Breast epithelium (tissue), 4 donors: ENCODE measurements at regions of chr1 and their contacts with region 1.

Region 1: DNA sequence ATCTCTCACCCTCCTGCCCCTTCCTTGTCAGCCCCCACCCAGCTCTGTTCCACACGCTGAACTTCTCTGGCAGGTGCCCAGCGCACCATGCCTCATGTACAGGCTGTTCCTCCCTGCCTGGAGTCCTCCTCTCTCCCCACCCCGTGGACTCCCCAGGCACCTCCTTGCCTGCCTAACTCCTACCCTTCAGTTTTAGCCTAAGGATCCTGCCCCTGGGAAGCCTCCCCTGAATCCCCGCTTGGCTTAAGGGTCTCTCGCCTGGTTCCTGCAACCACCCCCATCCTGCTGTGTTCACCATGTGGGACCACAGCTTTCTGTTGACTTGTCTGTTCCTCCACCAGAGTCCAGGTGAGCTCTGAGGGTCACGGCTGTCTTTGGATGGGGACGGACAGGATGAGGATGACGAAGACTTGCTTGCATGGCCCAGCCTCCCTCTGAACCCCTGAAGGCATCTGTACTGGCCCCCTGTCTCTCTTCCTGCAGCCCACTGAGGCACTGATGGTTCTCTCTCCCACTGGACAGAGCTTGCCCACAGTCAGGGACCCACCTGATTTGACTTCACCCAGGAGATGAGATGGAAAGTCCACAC is 153.2 kb upstream of the C1orf174 start:
- DNase-seq: no peak
- H3K4me3 ChIP-seq: no peak overlapping the region
- H3K27ac ChIP-seq: no peak overlapping the region
- H3K4me1 ChIP-seq: no peaks in the 10 kb centered on the region
- H3K27me3 ChIP-seq: peaks cover 0 to 21% of the 10 kb centered on the region in 2 donors
- CTCF ChIP-seq: no peak
- POLR2A ChIP-seq: no peak

Region 2: DNA sequence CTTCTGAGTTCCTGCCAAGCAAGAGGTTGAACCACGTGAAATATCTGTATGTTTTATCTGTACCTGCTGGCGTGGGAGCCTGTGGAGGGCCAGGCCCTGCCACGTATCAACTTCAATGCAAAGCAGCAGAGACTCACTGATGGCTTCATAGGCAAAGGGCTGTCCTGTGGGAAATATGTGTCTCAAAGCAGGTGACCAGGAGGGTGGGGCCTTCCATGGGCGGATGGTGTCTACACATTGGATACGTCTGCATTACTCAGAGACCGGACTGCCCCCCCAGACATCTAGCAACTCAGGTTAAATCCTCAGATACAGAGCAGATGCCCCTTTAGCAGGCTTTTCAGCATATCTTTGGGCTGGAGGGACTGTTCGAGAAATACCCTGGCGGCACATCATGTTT is 57.6 kb after region 1 on chr1:
- intact Hi-C with region 1: loop called (anchors 5 kb)
- DNase-seq: no peak
- H3K4me3 ChIP-seq: no peak overlapping the region
- H3K27ac ChIP-seq: no peak overlapping the region
- H3K4me1 ChIP-seq: no peaks in the 10 kb centered on the region
- H3K27me3 ChIP-seq: no peaks in the 10 kb centered on the region
- CTCF ChIP-seq: no peak
- POLR2A ChIP-seq: no peak